PC-9 (cell line): ENCODE measurements at regions of chr3 and their contacts with region 1.

Region 1: DNA sequence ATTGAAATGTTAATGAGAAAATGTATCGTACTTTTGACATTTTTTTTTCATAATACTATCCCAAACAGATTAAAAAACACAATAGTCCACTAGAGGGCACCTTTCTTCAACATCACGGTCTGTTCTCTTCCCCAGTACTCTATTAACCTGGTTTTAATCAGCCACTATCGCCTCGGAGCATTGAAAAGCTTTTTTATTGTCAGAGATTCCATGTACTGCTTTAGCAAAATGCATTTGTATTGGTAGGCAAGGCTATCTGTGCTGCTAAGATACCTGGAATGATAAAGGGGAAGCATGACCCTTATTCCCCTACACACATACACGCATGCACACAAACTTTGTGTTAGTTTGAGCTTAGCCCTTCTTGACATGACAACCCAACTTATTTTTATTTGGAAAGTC is 160.1 kb upstream of the IL12A start:
- DNase-seq: no peak
- H3K4me3 ChIP-seq: no peak overlapping the region
- H3K27ac ChIP-seq: no peak overlapping the region
- H3K4me1 ChIP-seq: peaks cover 39% of the 10 kb centered on the region
- H3K27me3 ChIP-seq: no peaks in the 10 kb centered on the region
- CTCF ChIP-seq: peak; percentile 76

Region 2: DNA sequence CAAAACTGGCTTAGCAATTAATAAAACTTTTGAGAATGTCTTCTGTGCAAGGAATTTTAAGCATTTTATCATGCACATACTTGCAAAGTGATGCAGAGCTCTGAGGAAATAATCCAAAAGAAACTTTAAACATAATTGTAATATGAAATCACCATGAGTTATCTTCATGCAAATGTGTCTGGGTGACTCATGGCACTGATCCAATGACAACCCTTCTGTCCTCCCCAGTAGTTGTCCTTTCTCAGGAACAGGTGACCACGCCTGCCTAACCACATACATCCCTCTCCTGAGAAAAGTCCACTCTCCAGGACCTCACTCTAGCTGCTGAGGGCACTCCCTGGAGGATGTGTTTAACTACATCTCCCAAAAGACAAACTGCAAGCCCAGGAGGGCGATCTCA is 370.5 kb before region 1 on chr3:
- CTCF ChIA-PET with region 1: no interaction called
- POLR2A ChIA-PET with region 1: no interaction called
- intact Hi-C with region 1: loop called (anchors 5 kb)
- DNase-seq: peak; percentile 92 to 96
- H3K4me3 ChIP-seq: no peak overlapping the region
- H3K27ac ChIP-seq: peak overlapping the region; percentile 63
- H3K4me1 ChIP-seq: peaks cover 25% of the 10 kb centered on the region
- H3K27me3 ChIP-seq: no peaks in the 10 kb centered on the region
- CTCF ChIP-seq: no peak

Region 3: GRCh38 chr3:159854500-159855124 is 26.1 kb after region 1 on chr3:
- CTCF ChIA-PET with region 1: interaction called, 11 read pairs
- POLR2A ChIA-PET with region 1: interaction called, 6 read pairs
- intact Hi-C with region 1: loop called (anchors 1 kb)
- DNase-seq: peak; percentile 64 to 99
- H3K4me3 ChIP-seq: peak overlapping the region; percentile 22; the same call in 1 of the 2 replicates
- H3K27ac ChIP-seq: peak overlapping the region; percentile 71
- H3K4me1 ChIP-seq: peaks cover 38% of the 10 kb centered on the region
- H3K27me3 ChIP-seq: no peaks in the 10 kb centered on the region
- CTCF ChIP-seq: no peak

Region 4: DNA sequence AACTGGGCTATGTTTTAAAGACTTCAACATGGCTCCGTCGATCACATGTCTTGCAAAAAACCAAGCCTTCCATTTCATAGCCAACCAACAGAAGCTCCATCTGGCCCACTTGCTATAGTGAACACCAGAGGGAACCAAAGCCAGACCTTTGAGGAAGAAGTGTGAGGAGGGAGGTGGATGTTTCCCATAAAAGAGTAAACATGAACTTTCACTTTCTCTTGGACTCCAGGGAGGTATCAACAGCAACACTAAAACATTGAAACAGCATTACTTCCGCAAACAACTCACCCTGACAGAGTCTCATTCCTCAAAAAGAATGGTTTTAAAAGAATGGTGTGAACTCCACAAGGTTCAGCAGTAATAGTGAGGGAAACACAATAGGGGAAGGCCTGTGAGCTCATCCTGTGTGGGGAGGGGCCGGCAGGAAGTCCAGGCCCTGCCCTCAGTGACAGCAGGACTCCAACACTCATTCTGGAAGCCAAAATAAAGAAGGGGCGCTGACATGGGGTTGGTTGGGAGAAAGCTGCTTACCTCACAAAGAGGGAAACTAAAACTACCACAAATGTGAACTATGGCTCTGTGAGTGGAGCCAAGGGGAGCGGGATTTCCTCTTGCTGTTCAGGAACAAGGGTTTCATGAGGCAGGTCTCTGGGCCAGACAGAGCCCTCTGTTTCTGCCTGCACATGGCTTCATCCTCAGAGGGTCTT is 101.0 kb after region 1 on chr3:
- CTCF ChIA-PET with region 1: no interaction called
- POLR2A ChIA-PET with region 1: no interaction called
- intact Hi-C with region 1: loop called (anchors 1 kb)
- DNase-seq: peak; percentile 51 to 93
- H3K4me3 ChIP-seq: peak overlapping the region; percentile 27; the same call in 1 of the 2 replicates
- H3K27ac ChIP-seq: peak overlapping the region; percentile 94
- H3K4me1 ChIP-seq: peaks cover 46% of the 10 kb centered on the region
- H3K27me3 ChIP-seq: no peaks in the 10 kb centered on the region
- CTCF ChIP-seq: peak; percentile 62

Region 5: GRCh38 chr3:160331127-160331937 is 502.8 kb after region 1 on chr3:
- CTCF ChIA-PET with region 1: interaction called, 11 read pairs
- POLR2A ChIA-PET with region 1: no interaction called
- intact Hi-C with region 1: no loop called
- DNase-seq: no peak
- H3K4me3 ChIP-seq: 0 out of 2 replicates have a peak overlapping the region, but pooled peaks have one; percentile 1
- H3K27ac ChIP-seq: peak overlapping the region; percentile 82
- H3K4me1 ChIP-seq: peaks cover 13% of the 10 kb centered on the region
- H3K27me3 ChIP-seq: no peaks in the 10 kb centered on the region
- CTCF ChIP-seq: no peak